Common myeloid progenitor, CD34-positive (primary cell): ENCODE measurements at regions of chr1 and their contacts with region 1.

Region 1: DNA sequence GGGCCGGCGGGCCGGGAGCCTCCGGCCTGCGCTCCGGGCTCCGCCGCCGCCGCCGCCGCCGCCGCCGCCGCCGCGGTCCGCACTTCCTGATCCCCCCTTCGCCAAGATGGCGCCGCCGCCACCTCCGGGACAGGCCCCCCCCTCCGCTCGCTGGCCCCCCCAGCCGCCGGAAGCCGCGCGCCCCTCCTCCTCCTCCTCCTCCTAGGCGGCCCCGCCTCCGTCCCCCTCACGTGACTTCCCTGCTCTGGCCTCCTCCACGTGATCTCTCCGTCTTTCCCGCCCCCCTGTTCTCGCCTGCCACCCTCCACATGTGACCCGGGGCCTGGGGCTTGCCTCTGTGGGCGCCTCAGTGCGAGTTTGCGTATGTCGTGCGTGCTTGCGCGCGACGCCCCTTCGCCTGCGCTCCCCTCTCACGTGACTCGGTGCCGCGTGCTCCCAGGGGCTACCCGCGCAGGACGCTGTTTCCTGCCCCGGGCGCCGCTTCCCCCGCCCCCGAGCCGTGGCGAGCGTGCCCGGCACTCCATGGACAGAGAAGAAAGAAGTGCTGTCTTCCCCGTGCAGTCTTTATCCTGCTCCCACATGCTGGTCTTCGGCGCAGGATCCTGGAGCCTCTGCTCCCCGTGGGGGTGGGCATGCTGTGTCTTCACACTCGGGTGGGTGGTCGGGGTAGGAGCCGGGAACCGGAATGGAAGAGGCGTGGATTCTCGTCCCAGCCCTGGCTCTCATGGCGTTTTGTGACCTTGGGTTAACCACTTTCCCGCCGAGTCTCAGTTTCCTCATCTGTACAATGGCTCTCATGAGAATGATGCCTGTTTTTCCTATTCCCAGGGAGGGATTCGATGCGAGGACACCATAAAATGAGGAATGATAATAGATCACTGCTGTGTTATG is at the start of gene UBE2Q1:
- DNase-seq: peak; percentile 99 to 100 (median 100)
- H3K4me3 ChIP-seq: peak within 1 kb of the TSS; percentile 74 to 92 (median 82)
- H3K27ac ChIP-seq: peak within 1 kb of the TSS; percentile 72 to 84
- H3K4me1 ChIP-seq: peaks cover 14 to 31% (median 27%) of the 10 kb centered on the region in 4 experiments
- H3K27me3 ChIP-seq: no peaks in the 10 kb centered on the region

Region 2: GRCh38 chr1:154546264-154547063 is 12.4 kb before region 1 on chr1:
- CTCF ChIA-PET with region 1: interaction called, 19 read pairs
- POLR2A ChIA-PET with region 1: no interaction called
- DNase-seq: peak; percentile 60 to 73 (median 62)
- H3K4me3 ChIP-seq: no peak overlapping the region
- H3K27ac ChIP-seq: no peak overlapping the region
- H3K4me1 ChIP-seq: peaks cover 0 to 8% (median 2%) of the 10 kb centered on the region in 4 experiments
- H3K27me3 ChIP-seq: peaks cover 0 to 2% (median 0%) of the 10 kb centered on the region in 5 experiments

Region 3: DNA sequence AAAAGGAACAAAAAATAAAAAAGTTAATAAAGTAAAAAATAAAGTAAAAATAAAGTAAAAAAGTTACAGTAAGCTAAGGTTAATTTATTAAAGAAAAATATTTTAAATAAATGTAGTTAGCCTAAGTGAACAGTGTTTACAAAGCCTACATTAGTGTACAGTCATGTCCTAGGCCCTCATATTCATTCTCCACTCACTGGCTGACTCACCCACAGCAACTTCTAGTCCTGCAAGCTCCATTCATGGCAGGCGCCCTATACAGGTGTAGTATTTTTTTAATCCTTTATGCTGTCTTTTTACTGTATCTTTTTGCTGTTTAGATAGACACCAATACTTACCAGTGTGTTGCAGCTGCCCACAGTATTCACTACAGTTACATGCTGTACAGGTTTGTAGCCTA is 36.8 kb after region 1 on chr1:
- CTCF ChIA-PET with region 1: interaction called, 11 read pairs
- POLR2A ChIA-PET with region 1: no interaction called
- DNase-seq: no peak
- H3K4me3 ChIP-seq: no peak overlapping the region
- H3K27ac ChIP-seq: no peak overlapping the region
- H3K4me1 ChIP-seq: no peaks in the 10 kb centered on the region
- H3K27me3 ChIP-seq: no peaks in the 10 kb centered on the region

Region 4: DNA sequence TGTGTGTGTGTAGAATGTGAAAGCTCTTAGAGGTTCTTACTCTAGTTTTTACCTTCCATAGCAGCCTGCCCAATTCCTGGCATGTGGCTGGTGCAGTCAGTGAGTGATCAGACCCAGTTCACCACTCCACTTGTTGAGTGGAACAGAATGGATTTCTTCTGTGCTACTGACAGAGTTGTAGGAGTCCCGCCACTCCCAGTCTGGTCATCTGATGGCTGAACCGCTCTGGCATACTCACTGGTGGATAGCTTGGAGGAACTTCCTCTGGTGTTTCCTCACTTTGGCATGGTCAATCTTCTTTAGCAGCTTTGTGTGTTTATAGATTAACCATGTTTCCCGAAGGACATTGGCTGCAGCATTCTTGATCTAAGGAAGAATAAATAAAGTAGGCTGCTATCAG is 155.8 kb after region 1 on chr1:
- CTCF ChIA-PET with region 1: no interaction called
- POLR2A ChIA-PET with region 1: no interaction called
- DNase-seq: peak; percentile 39 to 75 (median 55)
- H3K4me3 ChIP-seq: no peak overlapping the region
- H3K27ac ChIP-seq: no peak overlapping the region
- H3K4me1 ChIP-seq: peaks cover 0 to 18% (median 2%) of the 10 kb centered on the region in 4 experiments
- H3K27me3 ChIP-seq: peaks cover 0 to 2% (median 0%) of the 10 kb centered on the region in 5 experiments

Region 5: DNA sequence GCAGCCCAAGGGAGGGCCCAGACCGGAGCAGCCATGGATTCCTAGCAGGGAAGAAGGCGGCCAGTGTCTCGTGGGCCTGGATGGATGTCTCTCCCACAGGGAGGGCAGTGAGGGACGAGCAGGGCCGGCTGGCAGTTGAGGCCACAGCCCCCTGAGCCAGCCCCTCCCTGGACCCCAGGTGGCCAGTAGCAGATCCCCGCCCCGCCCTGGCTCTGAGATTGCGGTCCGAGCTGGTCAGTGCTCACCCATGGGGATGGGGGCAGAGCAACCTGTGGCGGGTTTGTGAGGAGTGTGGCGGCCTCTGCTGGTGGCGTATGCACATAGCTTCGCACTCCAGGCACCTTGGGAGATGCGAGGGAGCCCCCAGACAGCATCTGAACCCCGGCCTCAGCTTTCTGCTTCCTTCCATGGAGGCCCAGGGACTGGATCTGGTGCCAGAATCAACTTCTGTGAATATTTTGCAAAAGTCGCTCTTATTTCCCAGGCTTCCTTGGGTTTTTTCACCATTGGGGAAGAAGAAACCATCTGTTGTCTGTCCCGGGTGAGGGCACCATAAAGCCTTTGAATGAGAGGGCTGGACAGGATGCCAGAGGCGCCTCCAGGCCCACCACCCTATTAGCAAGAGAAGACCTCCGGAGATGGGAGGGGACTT is 319.7 kb after region 1 on chr1:
- CTCF ChIA-PET with region 1: interaction called, 10 read pairs
- POLR2A ChIA-PET with region 1: no interaction called
- DNase-seq: peak; percentile 52 to 73 (median 65)
- H3K4me3 ChIP-seq: no peak overlapping the region
- H3K27ac ChIP-seq: no peak overlapping the region
- H3K4me1 ChIP-seq: peaks cover 0 to 10% (median 6%) of the 10 kb centered on the region in 4 experiments
- H3K27me3 ChIP-seq: peaks cover 0 to 2% (median 0%) of the 10 kb centered on the region in 5 experiments